ENCODE measurements at regions of chrX and their contacts with region 1.

Region 1: GRCh38 chrX:132219343-132219768 is at the start of gene RAP2C:
- DNase-seq: no peak
- H3K4me3 ChIP-seq: peak within 1 kb of the TSS; percentile 63
- H3K27ac ChIP-seq: peak within 1 kb of the TSS; percentile 77
- H3K27me3 ChIP-seq: no peaks in the 10 kb centered on the region
- CTCF ChIP-seq: peak; percentile 63
- polyA plus RNA-seq, gene RAP2C: 14.4 and 19.5 TPM in 2 replicates

Region 2: GRCh38 chrX:132199941-132200340 is 19.4 kb before region 1 on chrX:
- CTCF ChIA-PET with region 1: interaction called, 10 read pairs
- POLR2A ChIA-PET with region 1: no interaction called
- DNase-seq: no peak
- H3K4me3 ChIP-seq: no peak overlapping the region
- H3K27ac ChIP-seq: no peak overlapping the region
- H3K27me3 ChIP-seq: no peaks in the 10 kb centered on the region
- CTCF ChIP-seq: no peak

Region 3: DNA sequence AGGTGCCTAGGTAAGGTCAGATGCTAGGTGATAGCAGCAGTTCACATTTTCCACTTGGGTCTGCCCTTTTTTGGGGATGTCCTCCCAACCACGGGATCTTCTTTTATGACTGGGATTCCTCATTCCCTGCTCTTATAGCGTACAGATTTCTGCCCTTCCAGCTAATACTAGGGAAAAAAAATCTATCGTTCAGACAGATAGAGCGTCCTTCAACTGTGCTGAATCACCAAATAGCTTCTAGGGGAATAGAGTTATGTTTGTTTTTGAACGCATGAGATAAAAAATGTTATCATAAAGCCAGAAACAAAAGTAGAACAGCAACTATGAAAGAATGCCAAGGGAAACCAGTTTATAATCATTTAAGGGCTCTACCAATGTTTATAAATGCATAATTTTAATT is 13.1 kb before region 1 on chrX:
- CTCF ChIA-PET with region 1: interaction called, 16 read pairs
- POLR2A ChIA-PET with region 1: no interaction called
- DNase-seq: no peak
- H3K4me3 ChIP-seq: no peak overlapping the region
- H3K27ac ChIP-seq: no peak overlapping the region
- H3K27me3 ChIP-seq: no peaks in the 10 kb centered on the region
- CTCF ChIP-seq: no peak

Region 4: DNA sequence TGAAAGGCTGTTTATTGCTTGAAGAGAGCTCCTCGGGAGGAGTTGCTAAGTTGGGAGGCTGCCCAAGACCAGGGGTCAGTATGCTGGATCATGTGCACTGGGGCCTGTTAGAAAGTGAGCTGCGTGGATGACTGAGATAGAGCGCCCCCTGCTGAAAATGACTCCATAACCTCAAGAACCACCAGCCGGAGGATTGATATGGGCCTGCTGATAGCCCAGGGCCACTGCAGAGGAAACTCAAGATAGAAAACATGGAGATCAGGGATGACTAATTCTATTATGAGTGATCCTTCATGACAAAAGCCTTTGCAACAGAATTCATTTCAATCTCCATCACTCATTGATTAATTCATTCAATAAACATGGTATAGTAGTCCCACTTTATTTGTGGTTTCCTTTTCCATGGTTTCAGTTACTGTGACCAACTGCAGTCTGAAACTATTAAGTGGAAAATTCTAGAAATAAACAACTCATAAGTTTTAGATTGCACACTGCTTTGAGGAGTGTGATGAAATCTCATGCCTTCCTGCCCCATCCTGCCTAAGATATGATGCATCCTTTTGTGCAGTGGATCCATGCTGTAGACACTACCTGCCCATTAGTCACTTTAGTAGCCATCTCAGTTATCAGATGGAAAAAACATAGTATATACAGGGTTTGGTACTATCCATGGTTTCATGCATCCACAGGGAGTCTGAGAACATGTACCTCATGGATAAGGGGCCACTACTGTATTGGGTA is 396.2 kb after region 1 on chrX:
- CTCF ChIA-PET with region 1: interaction called, 10 read pairs
- POLR2A ChIA-PET with region 1: no interaction called
- DNase-seq: no peak
- H3K4me3 ChIP-seq: no peak overlapping the region
- H3K27ac ChIP-seq: no peak overlapping the region
- H3K27me3 ChIP-seq: no peaks in the 10 kb centered on the region
- CTCF ChIP-seq: peak; percentile 33